Activated CD8-positive, alpha-beta T cell treated with anti-CD3 and anti-CD28 coated beads for 36 hours (primary cell): ENCODE measurements at regions of chr6 and their contacts with region 1.

Region 1: GRCh38 chr6:111823831-111824607 is 49.2 kb downstream of the FYN start:
- DNase-seq: peak; percentile 61
- ATAC-seq: peak; percentile 78
- H3K4me3 Mint-ChIP-seq: peak overlapping the region; percentile 39
- H3K27ac Mint-ChIP-seq: peak overlapping the region; percentile 97
- H3K4me1 Mint-ChIP-seq: peaks cover 83% of the 10 kb centered on the region
- H3K27me3 Mint-ChIP-seq: no peaks in the 10 kb centered on the region
- CTCF ChIP-seq: no peak

Region 2: DNA sequence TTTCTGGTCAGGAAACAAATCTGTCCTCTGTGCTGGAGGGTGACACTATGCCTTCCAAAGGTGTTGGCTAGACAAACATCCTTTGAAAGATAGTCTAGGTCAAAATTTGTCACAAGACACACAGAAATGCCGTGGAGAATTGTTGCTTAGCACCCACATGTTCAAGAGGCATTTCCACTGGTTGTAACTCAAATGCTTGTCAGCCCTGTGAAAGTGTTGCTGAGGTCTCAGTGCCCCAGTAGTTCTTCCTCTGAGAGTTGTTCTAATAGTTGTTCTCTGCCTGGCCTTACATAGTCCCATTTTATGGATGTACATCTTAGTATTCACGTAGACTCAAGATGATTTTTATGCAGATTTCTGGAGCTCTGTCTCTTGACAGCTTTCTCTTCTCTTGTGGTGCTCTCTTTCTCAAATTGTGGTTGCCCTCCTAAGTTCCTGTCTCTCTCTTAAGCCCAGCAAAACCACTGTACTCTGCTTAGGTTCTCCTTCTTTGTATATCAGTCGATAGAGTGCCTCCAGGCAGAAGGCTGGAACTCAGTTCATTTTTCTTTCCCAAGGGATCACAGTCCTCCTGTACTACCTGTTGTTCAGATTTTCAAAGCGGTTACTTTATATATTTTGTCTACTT is 301.5 kb before region 1 on chr6:
- CTCF ChIA-PET with region 1: no interaction called
- POLR2A ChIA-PET with region 1: no interaction called
- intact Hi-C with region 1: no loop called
- DNase-seq: no peak
- ATAC-seq: peak; percentile 49
- H3K4me3 Mint-ChIP-seq: no peak overlapping the region
- H3K27ac Mint-ChIP-seq: peak overlapping the region; percentile 40
- H3K4me1 Mint-ChIP-seq: peaks cover 26% of the 10 kb centered on the region
- H3K27me3 Mint-ChIP-seq: no peaks in the 10 kb centered on the region
- CTCF ChIP-seq: no peak

Region 3: GRCh38 chr6:111764238-111765175 is 59.5 kb before region 1 on chr6:
- CTCF ChIA-PET with region 1: interaction called, 10 read pairs
- POLR2A ChIA-PET with region 1: interaction called, 13 read pairs
- intact Hi-C with region 1: no loop called
- DNase-seq: peak; percentile 81
- ATAC-seq: peak; percentile 56
- H3K4me3 Mint-ChIP-seq: peak overlapping the region; percentile 62
- H3K27ac Mint-ChIP-seq: peak overlapping the region; percentile 99
- H3K4me1 Mint-ChIP-seq: peaks cover 98% of the 10 kb centered on the region
- H3K27me3 Mint-ChIP-seq: no peaks in the 10 kb centered on the region
- CTCF ChIP-seq: no peak

Region 4: GRCh38 chr6:111804627-111805235 is 19.3 kb before region 1 on chr6:
- CTCF ChIA-PET with region 1: interaction called, 39 read pairs
- POLR2A ChIA-PET with region 1: interaction called, 64 read pairs
- intact Hi-C with region 1: loop called (anchors 1 kb)
- DNase-seq: peak; percentile 94
- ATAC-seq: peak; percentile 57
- H3K4me3 Mint-ChIP-seq: peak overlapping the region; percentile 63
- H3K27ac Mint-ChIP-seq: peak overlapping the region; percentile 99
- H3K4me1 Mint-ChIP-seq: peaks cover 95% of the 10 kb centered on the region
- H3K27me3 Mint-ChIP-seq: no peaks in the 10 kb centered on the region
- CTCF ChIP-seq: no peak

Region 5: GRCh38 chr6:111837641-111838500 is 13.9 kb after region 1 on chr6:
- CTCF ChIA-PET with region 1: interaction called, 13 read pairs
- POLR2A ChIA-PET with region 1: interaction called, 26 read pairs
- intact Hi-C with region 1: loop called (anchors 1 kb)
- DNase-seq: peak; percentile 81
- ATAC-seq: peak; percentile 77
- H3K4me3 Mint-ChIP-seq: peak overlapping the region; percentile 67
- H3K27ac Mint-ChIP-seq: no peak overlapping the region
- H3K4me1 Mint-ChIP-seq: peaks cover 73% of the 10 kb centered on the region
- H3K27me3 Mint-ChIP-seq: no peaks in the 10 kb centered on the region
- CTCF ChIP-seq: no peak

Region 6: DNA sequence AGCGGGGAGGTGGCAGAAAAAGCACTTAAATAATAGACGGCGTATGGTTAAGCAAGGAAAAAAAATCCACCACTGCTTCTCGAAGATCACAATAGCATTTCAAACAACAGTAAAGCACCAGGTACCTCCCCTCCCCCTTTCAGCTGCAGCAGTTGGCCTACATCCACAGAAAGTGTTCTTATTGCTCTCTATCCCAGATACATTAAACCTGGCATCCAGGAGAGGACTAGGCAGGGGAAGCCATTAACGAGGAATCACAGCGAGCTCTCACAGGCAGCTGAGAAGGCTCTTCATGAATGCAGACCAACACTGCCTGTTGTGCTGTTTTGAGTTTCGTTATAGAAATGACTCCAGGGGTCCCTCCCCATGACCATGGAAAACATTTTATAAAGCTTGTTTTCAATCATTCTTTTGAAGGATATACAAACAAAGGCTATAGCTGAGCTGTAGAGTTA is 37.4 kb after region 1 on chr6:
- CTCF ChIA-PET with region 1: interaction called, 5 read pairs
- POLR2A ChIA-PET with region 1: interaction called, 19 read pairs
- intact Hi-C with region 1: no loop called
- DNase-seq: no peak
- ATAC-seq: peak; percentile 41
- H3K4me3 Mint-ChIP-seq: peak overlapping the region; percentile 35
- H3K27ac Mint-ChIP-seq: peak overlapping the region; percentile 91
- H3K4me1 Mint-ChIP-seq: peaks cover 99% of the 10 kb centered on the region
- H3K27me3 Mint-ChIP-seq: no peaks in the 10 kb centered on the region
- CTCF ChIP-seq: no peak

Region 7: DNA sequence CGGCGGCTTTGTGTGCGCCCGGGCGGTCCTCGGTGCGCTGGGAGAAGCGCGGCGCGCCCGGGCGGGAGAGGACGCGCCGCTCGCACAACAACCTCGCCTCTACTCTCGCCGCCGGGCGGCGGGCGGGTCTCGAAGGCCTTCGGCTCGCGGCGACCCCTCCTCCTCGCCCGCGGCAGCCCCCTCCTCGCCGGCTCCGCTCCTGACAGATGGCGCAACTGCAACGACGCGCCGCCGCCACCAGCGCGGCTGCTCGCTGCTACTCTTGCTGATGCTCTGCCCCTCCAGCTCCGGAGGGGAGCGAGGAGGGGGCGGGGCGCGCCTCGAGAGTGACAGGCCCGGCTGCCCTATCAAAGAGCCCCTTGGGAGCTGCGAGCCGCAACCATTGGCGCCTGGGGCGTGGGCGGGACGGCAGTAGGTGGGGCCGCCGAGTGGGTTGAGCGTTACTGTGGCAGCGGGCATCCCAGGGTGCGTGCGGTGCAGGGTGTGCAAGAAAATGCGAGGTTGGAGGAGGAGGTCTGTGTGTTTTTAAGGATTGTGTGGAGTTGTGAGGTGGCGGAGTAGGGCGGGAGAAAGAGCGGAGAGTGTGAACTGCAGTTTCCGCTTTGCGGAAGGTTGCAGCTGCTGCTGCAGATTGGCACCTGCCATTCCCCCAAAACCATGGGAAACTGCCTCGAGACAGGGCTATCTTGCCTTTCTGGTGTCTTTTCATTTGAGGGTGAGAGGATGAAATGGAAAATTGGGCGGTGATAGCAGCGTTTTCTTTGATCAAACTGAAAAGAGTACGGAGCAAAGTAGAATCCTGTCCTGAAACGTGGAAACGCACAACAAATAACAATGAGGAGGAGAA is 49.4 kb after region 1 on chr6 and contains the start of gene FYN:
- CTCF ChIA-PET with region 1: interaction called, 10 read pairs
- POLR2A ChIA-PET with region 1: interaction called, 11 read pairs
- intact Hi-C with region 1: no loop called
- DNase-seq: peak; percentile 100
- ATAC-seq: peak; percentile 86
- H3K4me3 Mint-ChIP-seq: peak within 1 kb of the TSS; percentile 98
- H3K27ac Mint-ChIP-seq: peak within 1 kb of the TSS; percentile 98
- H3K4me1 Mint-ChIP-seq: peaks cover 30% of the 10 kb centered on the region
- H3K27me3 Mint-ChIP-seq: no peaks in the 10 kb centered on the region
- CTCF ChIP-seq: peak; percentile 45
- total RNA-seq, gene FYN: 384 to 386 TPM

Region 8: DNA sequence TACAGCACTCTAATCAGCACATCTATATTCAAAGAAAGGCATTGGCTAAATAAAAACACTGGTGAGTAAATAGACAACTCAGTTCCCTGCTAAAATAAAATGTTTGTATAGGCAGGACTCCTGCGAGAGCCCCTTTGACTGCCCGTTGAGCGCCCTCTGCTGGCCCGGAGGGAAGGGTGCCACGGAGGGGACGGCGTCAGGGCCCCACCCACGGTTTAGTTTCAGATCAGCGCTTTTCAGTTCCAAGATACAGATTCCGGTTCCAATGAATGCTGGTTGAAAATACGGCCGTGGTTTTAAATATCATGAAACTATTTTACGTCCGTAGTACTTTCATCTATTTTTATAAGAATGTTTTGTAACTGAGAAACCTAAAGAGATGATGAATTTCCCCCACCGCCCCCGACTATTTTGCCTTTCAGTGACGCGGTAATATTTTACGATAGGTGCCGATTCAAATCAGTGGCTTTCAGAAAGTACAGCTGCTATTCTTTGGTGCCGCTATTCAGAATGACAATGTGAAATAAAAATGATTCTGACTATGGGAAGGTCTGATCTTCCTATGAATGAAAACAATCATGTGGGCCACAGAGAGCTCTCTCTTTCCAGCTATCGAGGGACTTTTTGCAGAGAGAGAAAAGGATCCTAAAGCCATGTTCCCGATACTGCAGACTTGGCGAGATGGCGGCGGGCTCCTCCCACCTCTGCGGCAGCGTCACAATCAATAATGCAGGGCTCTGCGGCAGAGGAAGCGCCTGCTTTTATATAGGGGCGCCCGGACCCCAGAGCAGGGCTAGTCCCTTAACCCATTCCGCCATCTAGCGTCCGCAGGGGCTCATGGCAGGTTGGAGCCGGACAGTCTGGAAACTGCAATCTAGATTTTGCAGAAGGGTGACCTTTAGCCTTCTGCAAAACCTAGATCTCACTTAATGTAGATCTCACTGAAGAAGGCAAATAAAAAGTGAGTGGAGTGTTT is 219.3 kb after region 1 on chr6:
- CTCF ChIA-PET with region 1: interaction called, 12 read pairs
- POLR2A ChIA-PET with region 1: no interaction called
- intact Hi-C with region 1: no loop called
- DNase-seq: peak; percentile 97
- ATAC-seq: peak; percentile 92
- H3K4me3 Mint-ChIP-seq: peak overlapping the region; percentile 86
- H3K27ac Mint-ChIP-seq: peak overlapping the region; percentile 99
- H3K4me1 Mint-ChIP-seq: peaks cover 40% of the 10 kb centered on the region
- H3K27me3 Mint-ChIP-seq: no peaks in the 10 kb centered on the region
- CTCF ChIP-seq: peak; percentile 90